Activated T-helper 1 cell treated with anti-CD3 and anti-CD28 coated beads, Interleukin-12 subunit alpha, Interleukin-12 subunit beta, Interleukin-2, Interleukin-4 antibody, amounts not matched to agents 30 ng/mL and 10 ng/mL and 1 ng/mL, durations not matched to agents 14 hours and 24 hours and 36 hours (primary cell): ENCODE measurements at regions of chr3 and their contacts with region 1.

Region 1: GRCh38 chr3:45938864-45939263 is 4.4 kb upstream of the CXCR6 start:
- DNase-seq: peak; percentile 77
- H3K4me3 Mint-ChIP-seq: no peak overlapping the region
- H3K27ac Mint-ChIP-seq: peak overlapping the region; percentile 0
- H3K4me1 Mint-ChIP-seq: peaks cover 53% of the 10 kb centered on the region
- H3K27me3 Mint-ChIP-seq: no peaks in the 10 kb centered on the region

Region 2: GRCh38 chr3:45962033-45962432 is 23.2 kb after region 1 on chr3:
- intact Hi-C with region 1: loop called (anchors 1 kb)
- DNase-seq: peak; percentile 48
- H3K4me3 Mint-ChIP-seq: peak overlapping the region; percentile 54
- H3K27ac Mint-ChIP-seq: peak overlapping the region; percentile 73
- H3K4me1 Mint-ChIP-seq: peaks cover 88% of the 10 kb centered on the region
- H3K27me3 Mint-ChIP-seq: no peaks in the 10 kb centered on the region

Region 3: GRCh38 chr3:45995236-45996192 is 56.6 kb after region 1 on chr3 and contains the start of gene FYCO1:
- intact Hi-C with region 1: loop called (anchors 1 kb)
- DNase-seq: peak; percentile 82
- H3K4me3 Mint-ChIP-seq: peak within 1 kb of the TSS; percentile 87
- H3K27ac Mint-ChIP-seq: peak within 1 kb of the TSS; percentile 96
- H3K4me1 Mint-ChIP-seq: peaks cover 64% of the 10 kb centered on the region
- H3K27me3 Mint-ChIP-seq: peaks cover 3% of the 10 kb centered on the region
- total RNA-seq, gene FYCO1: 16.1 and 16.3 TPM in 2 replicates

Region 4: GRCh38 chr3:46070595-46071093 is 131.8 kb after region 1 on chr3:
- intact Hi-C with region 1: loop called (anchors 1 kb)
- DNase-seq: no peak
- H3K4me3 Mint-ChIP-seq: peak overlapping the region; percentile 53
- H3K27ac Mint-ChIP-seq: peak overlapping the region; percentile 96
- H3K4me1 Mint-ChIP-seq: peaks cover 70% of the 10 kb centered on the region
- H3K27me3 Mint-ChIP-seq: peaks cover 12% of the 10 kb centered on the region

Region 5: DNA sequence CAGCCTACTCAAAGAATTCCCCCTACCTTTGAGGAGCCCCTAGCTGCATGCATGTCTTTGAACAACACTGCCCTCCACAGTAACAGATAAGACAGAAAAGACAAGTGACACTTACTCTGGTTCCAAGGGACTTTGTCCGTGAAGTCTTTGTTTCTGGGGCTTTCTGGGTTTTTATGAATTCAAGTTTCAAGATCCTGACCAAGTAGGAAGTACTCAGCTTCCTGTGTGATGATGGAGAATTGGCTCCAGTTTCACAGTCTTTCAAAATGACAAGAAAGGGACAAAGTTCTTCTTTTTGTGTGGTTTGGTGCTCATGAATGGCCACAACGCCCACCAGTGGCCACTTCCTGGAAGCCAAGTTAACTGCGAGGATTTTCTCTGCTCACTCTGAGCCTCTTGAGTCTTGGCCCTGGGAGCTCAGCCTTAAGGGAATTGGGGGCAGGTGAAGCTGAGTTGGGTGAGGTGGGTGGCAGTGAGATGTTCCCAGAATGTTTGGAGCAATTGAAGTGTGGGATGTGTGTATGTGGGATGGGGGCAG is 269.4 kb after region 1 on chr3 and contains the start of gene CCR1:
- intact Hi-C with region 1: loop called (anchors 2 kb)
- DNase-seq: peak; percentile 58
- H3K4me3 Mint-ChIP-seq: peak within 1 kb of the TSS; percentile 78
- H3K27ac Mint-ChIP-seq: peak within 1 kb of the TSS; percentile 91
- H3K4me1 Mint-ChIP-seq: peaks cover 70% of the 10 kb centered on the region
- H3K27me3 Mint-ChIP-seq: no peaks in the 10 kb centered on the region
- total RNA-seq, gene CCR1: 22.6 and 23.2 TPM in 2 replicates

Region 6: GRCh38 chr3:46378426-46378942 is 439.6 kb after region 1 on chr3:
- intact Hi-C with region 1: loop called (anchors 1 kb)
- DNase-seq: peak; percentile 55
- H3K4me3 Mint-ChIP-seq: no peak overlapping the region
- H3K27ac Mint-ChIP-seq: no peak overlapping the region
- H3K4me1 Mint-ChIP-seq: peaks cover 56% of the 10 kb centered on the region
- H3K27me3 Mint-ChIP-seq: peaks cover 8% of the 10 kb centered on the region